Activated B cell treated with CpG ODN at 0.5 μM for 24 hours (primary cell): ENCODE measurements at regions of chr3 and their contacts with region 1.

Region 1: DNA sequence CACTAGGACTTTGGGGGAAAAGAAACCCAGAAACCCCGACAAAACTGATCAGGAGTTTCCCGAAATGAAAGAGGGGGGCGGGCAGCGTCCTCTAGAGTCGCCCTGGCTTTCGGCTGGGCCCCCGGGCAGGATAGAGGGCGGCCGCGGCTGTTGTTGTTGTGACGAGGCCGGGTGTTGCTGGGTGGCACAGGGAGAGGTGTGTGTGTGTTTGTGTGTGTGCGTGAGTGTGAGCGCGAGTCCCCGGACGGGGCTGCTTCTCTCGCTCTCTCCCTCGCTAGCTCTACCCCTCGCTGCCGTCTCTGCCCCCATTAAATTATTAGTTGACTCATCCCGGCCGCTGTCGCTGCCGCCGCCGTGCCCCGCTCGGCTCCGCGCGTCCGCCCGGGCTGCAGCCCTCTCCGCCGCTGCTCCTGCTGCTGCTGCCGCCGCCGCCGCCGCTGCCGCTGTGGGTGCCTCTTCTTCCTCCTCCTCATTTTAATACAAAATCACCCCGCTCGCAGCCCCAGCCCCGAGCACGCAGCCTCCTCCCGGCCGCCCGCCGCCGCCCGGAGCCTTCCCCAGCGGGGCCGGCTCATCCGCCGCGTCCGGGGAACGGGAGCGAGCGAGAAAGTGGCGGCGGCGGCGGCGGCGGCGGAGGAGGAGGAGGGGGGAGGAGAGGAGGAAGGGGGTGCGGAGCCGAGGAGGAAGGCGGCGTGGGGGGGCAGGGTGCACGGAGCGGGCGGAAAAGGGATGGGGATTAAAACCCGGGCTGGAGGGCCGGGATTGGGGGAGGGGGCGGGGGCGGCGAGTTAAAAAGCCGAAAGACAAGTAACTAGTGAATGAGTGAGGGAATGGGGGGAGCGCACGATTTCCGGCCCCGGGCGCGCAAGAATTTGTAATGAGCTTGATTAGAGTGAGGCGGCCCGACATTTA is at the start of gene SATB1:
- DNase-seq: peak; percentile 68
- ATAC-seq: peak; percentile 49
- H3K4me3 Mint-ChIP-seq: peak within 1 kb of the TSS; percentile 91
- H3K27ac Mint-ChIP-seq: peak within 1 kb of the TSS; percentile 87
- H3K4me1 Mint-ChIP-seq: peaks cover 40% of the 10 kb centered on the region
- H3K27me3 Mint-ChIP-seq: no peaks in the 10 kb centered on the region
- CTCF ChIP-seq: no peak
- total RNA-seq, gene SATB1: 23.0 and 30.8 TPM in 2 replicates

Region 2: DNA sequence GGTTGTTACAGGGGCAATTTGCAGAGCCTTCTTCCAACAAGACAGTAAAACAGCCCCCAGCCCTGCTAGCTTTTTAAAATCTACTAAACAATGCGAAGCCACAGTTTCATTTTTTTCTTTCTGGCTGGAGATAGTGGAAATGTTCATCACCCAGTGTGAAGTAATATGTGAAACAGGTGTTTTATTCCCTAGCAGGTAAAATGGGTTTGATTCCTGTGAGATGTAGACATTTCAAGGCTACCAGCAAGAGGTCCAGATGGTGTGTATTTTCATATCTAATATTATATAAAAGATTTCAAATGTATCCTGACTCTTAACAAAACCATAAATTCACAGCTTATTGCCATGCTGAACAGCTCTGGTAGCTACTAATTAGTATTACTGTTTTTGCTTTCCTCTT is 160.1 kb before region 1 on chr3:
- CTCF ChIA-PET with region 1: no interaction called
- POLR2A ChIA-PET with region 1: no interaction called
- intact Hi-C with region 1: no loop called
- DNase-seq: no peak
- ATAC-seq: no peak
- H3K4me3 Mint-ChIP-seq: no peak overlapping the region
- H3K27ac Mint-ChIP-seq: no peak overlapping the region
- H3K4me1 Mint-ChIP-seq: no peaks in the 10 kb centered on the region
- H3K27me3 Mint-ChIP-seq: peaks cover 2% of the 10 kb centered on the region
- CTCF ChIP-seq: no peak

Region 3: DNA sequence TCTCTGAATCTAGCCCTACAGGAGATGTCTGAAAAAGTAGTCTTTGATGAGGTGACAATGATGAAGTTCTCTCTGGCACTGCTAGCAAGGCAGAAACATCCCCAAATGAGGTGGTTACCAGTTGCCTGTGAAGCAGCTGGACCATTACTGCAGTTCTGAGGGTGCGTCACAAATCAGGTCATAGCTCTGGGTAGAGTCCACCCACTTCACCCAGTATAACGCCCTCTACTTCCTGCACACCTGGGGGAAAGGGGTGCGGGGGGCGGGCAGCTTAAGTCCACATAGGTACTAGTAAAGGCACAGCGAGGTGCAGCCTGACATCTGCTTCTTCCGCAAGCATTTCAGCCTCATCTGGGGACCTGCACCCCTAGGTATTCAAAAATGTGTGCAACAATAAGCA is 13.6 kb after region 1 on chr3:
- CTCF ChIA-PET with region 1: no interaction called
- POLR2A ChIA-PET with region 1: interaction called, 8 read pairs
- intact Hi-C with region 1: loop called (anchors 1 kb)
- DNase-seq: peak; percentile 19
- ATAC-seq: peak; percentile 86
- H3K4me3 Mint-ChIP-seq: peak overlapping the region; percentile 24
- H3K27ac Mint-ChIP-seq: peak overlapping the region; percentile 65
- H3K4me1 Mint-ChIP-seq: peaks cover 52% of the 10 kb centered on the region
- H3K27me3 Mint-ChIP-seq: no peaks in the 10 kb centered on the region
- CTCF ChIP-seq: no peak